Caco-2 (cell line): ENCODE measurements at regions of chr12 and their contacts with region 1.

Region 1: DNA sequence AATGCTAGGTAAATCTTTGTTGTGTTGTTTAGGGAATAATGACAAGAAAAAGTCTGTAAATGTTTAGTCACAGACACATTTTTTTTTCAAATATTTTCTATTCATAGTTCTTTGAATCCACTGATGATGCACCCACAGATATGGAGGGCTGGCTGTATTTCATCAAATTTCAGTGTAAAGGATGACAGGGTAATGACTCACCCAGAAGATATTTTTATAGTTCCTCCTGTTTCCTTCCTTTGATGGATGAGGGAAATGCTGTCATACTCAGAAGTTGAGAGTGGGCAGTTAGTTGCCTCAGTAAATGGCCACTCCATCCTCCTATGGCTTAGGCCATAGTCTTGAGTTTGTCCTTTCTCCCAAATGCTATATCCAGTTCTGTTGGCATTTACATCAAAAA is 76.9 kb upstream of the REP15 start:
- DNase-seq: peak in 1 of 2 experiments; percentile 49
- H3K4me3 ChIP-seq: no peak overlapping the region
- H3K4me3 Mint-ChIP-seq: no peak overlapping the region
- H3K27ac Mint-ChIP-seq: peak overlapping the region; percentile 70
- H3K4me1 ChIP-seq: peaks cover 60% of the 10 kb centered on the region
- H3K4me1 Mint-ChIP-seq: peaks cover 70% of the 10 kb centered on the region
- H3K27me3 ChIP-seq: no peaks in the 10 kb centered on the region
- H3K27me3 Mint-ChIP-seq: no peaks in the 10 kb centered on the region
- CTCF ChIP-seq: no peak

Region 2: GRCh38 chr12:27590869-27591268 is 28.4 kb before region 1 on chr12:
- CTCF ChIA-PET with region 1: no interaction called
- POLR2A ChIA-PET with region 1: no interaction called
- intact Hi-C with region 1: loop called (anchors 2 kb)
- DNase-seq: no peak
- H3K4me3 ChIP-seq: no peak overlapping the region
- H3K4me3 Mint-ChIP-seq: no peak overlapping the region
- H3K27ac Mint-ChIP-seq: peak overlapping the region; percentile 1
- H3K4me1 ChIP-seq: peaks cover 25% of the 10 kb centered on the region; the same call in 1 of the 2 replicates
- H3K4me1 Mint-ChIP-seq: peaks cover 28% of the 10 kb centered on the region
- H3K27me3 ChIP-seq: no peaks in the 10 kb centered on the region
- H3K27me3 Mint-ChIP-seq: no peaks in the 10 kb centered on the region
- CTCF ChIP-seq: no peak

Region 3: GRCh38 chr12:27607591-27607990 is 11.7 kb before region 1 on chr12:
- CTCF ChIA-PET with region 1: no interaction called
- POLR2A ChIA-PET with region 1: no interaction called
- intact Hi-C with region 1: loop called (anchors 1 kb)
- DNase-seq: no peak
- H3K4me3 ChIP-seq: no peak overlapping the region
- H3K4me3 Mint-ChIP-seq: no peak overlapping the region
- H3K27ac Mint-ChIP-seq: peak overlapping the region; percentile 73
- H3K4me1 ChIP-seq: peaks cover 43% of the 10 kb centered on the region
- H3K4me1 Mint-ChIP-seq: peaks cover 64% of the 10 kb centered on the region
- H3K27me3 ChIP-seq: no peaks in the 10 kb centered on the region
- H3K27me3 Mint-ChIP-seq: no peaks in the 10 kb centered on the region
- CTCF ChIP-seq: no peak